Activated CD4-positive, alpha-beta memory T cell treated with anti-CD3 and anti-CD28 coated beads for 36 hours (primary cell): ENCODE measurements at regions of chr16 and their contacts with region 1.

Region 1: DNA sequence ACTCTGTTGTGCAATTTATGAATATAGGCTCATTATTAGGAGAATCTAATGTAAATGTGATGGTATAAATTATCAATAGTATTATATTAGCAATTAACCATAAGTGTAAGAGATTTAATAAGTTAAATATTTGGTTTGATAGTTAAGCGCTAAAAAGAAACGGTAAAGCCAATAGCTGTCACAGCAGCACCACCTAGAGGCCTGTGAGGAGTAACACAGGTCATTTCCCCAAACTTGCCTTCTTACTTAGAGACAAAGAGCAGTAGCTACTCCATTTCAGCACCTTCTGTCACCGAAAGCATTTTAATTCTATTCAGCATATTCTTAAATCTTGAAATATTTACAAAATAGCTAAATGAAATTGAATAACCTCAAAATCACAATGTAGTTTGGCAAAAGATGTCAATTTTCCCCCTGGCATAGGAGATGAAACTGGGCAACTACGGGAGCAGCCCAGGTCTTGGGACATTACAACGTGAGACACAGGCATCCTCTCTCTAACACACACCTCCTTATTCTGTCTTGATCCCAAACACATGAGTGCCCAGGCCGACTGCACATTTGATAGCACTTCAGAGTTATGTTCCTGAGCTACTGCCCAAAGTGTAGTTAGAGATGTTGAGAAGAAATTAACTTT is 14.2 kb upstream of the DYNLRB2 start:
- DNase-seq: peak; percentile 63
- H3K4me3 Mint-ChIP-seq: no peak overlapping the region
- H3K27ac Mint-ChIP-seq: no peak overlapping the region
- H3K4me1 Mint-ChIP-seq: no peaks in the 10 kb centered on the region
- H3K27me3 Mint-ChIP-seq: peaks cover 1% of the 10 kb centered on the region

Region 2: GRCh38 chr16:80509872-80510271 is 16.7 kb before region 1 on chr16:
- CTCF ChIA-PET with region 1: interaction called, 11 read pairs
- POLR2A ChIA-PET with region 1: no interaction called
- intact Hi-C with region 1: no loop called
- DNase-seq: no peak
- H3K4me3 Mint-ChIP-seq: no peak overlapping the region
- H3K27ac Mint-ChIP-seq: no peak overlapping the region
- H3K4me1 Mint-ChIP-seq: no peaks in the 10 kb centered on the region
- H3K27me3 Mint-ChIP-seq: peaks cover 18% of the 10 kb centered on the region

Region 3: DNA sequence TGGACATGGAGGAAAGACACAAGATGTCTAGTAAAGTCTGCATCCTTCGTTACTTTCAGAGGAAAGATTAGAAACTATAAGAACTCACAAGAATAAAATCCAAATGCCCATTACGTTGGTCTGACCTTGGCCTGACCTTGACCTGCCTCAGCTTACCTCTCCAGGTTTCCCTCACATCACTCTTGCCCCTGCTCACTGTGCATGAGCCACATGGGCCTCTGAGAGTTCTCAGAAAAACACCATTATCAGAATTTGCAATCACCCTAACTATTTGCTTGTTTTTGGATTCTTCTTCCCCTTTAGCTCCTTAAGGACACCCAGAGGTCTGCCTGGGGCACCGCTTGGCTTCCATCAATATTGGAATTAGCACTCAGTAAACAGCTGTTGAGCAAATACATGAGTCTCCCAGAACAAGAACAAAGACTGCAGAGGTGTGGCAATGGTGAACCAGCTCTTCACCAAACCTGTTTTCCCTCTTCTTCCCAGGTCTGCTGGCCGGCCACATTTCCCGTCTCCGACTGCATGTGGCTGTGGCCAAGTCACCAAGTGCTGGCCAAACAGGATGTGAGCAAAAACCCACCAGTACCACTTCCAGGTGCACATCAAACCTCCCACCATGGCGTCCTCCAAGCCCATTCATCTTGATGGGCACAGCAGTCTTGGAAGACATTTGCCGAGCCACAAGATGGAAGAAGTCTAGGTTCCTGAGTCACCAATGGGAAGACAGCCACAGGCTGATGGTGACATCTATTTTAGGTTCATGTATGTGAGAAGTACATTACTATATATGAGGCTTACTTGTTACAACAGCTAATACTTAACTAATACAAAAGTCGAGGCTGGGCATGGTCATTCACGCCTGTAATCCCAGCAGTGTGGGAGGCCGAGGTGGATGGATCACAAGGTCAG is 87.5 kb after region 1 on chr16:
- CTCF ChIA-PET with region 1: interaction called, 10 read pairs
- POLR2A ChIA-PET with region 1: no interaction called
- intact Hi-C with region 1: no loop called
- DNase-seq: no peak
- H3K4me3 Mint-ChIP-seq: no peak overlapping the region
- H3K27ac Mint-ChIP-seq: no peak overlapping the region
- H3K4me1 Mint-ChIP-seq: no peaks in the 10 kb centered on the region
- H3K27me3 Mint-ChIP-seq: no peaks in the 10 kb centered on the region

Region 4: DNA sequence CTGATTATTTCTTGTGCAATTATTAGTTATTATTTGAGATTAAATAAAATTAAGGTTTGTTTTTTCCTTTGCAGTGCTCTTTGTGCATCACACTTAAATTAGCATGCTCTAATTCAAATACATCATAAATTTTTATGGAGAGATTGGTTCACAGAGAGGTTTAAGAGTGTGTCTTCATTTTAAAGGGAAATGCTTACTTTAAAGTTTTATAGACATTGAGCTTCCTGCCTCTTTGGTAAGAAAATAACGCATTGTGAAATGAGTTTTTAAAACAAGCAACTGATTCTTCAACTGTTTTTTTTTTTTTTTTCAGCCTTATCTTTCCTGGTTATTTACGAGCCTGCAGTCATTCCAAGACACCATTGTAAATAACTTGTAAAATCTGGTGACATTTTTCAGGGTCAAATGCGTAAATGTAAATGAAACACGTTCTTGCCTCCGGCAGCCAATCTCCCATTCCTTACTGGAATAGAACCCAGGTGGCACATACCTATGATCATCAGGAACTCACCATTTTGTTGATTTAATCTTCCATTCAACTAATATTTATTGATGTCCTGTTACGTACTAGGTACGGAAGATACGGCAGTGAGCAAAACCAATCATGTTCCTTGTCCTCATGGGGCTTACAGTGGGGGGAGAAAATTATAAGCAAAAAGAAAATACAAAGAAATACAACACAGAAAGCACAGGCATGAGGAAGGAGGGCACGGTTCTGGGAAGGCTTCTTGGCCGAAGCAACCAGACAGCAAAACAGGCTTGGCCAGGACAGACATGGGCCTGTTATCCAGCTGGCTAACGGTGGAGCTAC is 311.1 kb after region 1 on chr16:
- CTCF ChIA-PET with region 1: interaction called, 17 read pairs
- POLR2A ChIA-PET with region 1: no interaction called
- intact Hi-C with region 1: no loop called
- DNase-seq: no peak
- H3K4me3 Mint-ChIP-seq: no peak overlapping the region
- H3K27ac Mint-ChIP-seq: no peak overlapping the region
- H3K4me1 Mint-ChIP-seq: no peaks in the 10 kb centered on the region
- H3K27me3 Mint-ChIP-seq: peaks cover 20% of the 10 kb centered on the region

Region 5: GRCh38 chr16:80948886-80949493 is 422.4 kb after region 1 on chr16:
- CTCF ChIA-PET with region 1: interaction called, 3 read pairs
- POLR2A ChIA-PET with region 1: no interaction called
- intact Hi-C with region 1: loop called (anchors 5 kb)
- DNase-seq: peak; percentile 69
- H3K4me3 Mint-ChIP-seq: no peak overlapping the region
- H3K27ac Mint-ChIP-seq: no peak overlapping the region
- H3K4me1 Mint-ChIP-seq: peaks cover 22% of the 10 kb centered on the region
- H3K27me3 Mint-ChIP-seq: peaks cover 13% of the 10 kb centered on the region